H1 (cell line): ENCODE measurements at regions of chr9 and their contacts with region 1.

Region 1: GRCh38 chr9:14466429-14466818 is 152.5 kb upstream of the NFIB start:
- DNase-seq: no peak
- H3K4me3 ChIP-seq: no peak overlapping the region
- H3K27ac ChIP-seq: no peak overlapping the region
- H3K4me1 ChIP-seq: peaks cover 6 to 15% (median 11%) of the 10 kb centered on the region in 4 experiments
- H3K27me3 ChIP-seq: no peaks in the 10 kb centered on the region
- CTCF ChIP-seq: no peak
- EP300 ChIP-seq: no peak
- POLR2A ChIP-seq: no peak
- RAD21 ChIP-seq: no peak; a peak in 1 of 4 replicates

Region 2: GRCh38 chr9:14478175-14479162 is 12.0 kb after region 1 on chr9:
- CTCF ChIA-PET with region 1: interaction called, 27 read pairs
- POLR2A ChIA-PET with region 1: no interaction called
- DNase-seq: no peak
- H3K4me3 ChIP-seq: no peak overlapping the region
- H3K27ac ChIP-seq: no peak overlapping the region
- H3K4me1 ChIP-seq: peaks cover 0 to 9% (median 2%) of the 10 kb centered on the region in 4 experiments; a peak in 2 of 7 replicates
- H3K27me3 ChIP-seq: no peaks in the 10 kb centered on the region
- CTCF ChIP-seq: no peak
- EP300 ChIP-seq: no peak
- POLR2A ChIP-seq: no peak
- RAD21 ChIP-seq: no peak

Region 3: GRCh38 chr9:14573333-14573732 is 106.9 kb after region 1 on chr9:
- CTCF ChIA-PET with region 1: interaction called, 12 read pairs
- POLR2A ChIA-PET with region 1: no interaction called
- DNase-seq: no peak
- H3K4me3 ChIP-seq: no peak overlapping the region
- H3K27ac ChIP-seq: no peak overlapping the region
- H3K4me1 ChIP-seq: no peaks in the 10 kb centered on the region
- H3K27me3 ChIP-seq: no peaks in the 10 kb centered on the region
- CTCF ChIP-seq: no peak
- EP300 ChIP-seq: no peak
- POLR2A ChIP-seq: no peak
- RAD21 ChIP-seq: no peak

Region 4: DNA sequence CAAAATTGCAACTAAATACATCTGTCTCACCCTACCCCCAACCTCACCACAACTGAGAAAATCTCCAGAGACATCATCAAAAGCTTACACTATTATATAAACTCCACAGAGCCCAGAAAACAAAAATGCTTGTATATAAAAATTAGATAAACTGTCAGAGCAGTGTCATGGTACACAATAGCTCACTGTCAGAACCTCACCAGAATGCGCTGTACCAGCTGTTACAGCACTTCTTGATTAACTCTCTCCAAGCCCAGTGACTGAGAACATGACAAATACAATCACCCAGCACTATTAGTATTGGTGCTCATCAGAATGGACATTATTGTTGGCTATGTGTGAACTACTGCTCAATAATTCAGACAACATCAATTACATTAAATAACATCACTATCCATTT is 161.1 kb after region 1 on chr9:
- CTCF ChIA-PET with region 1: interaction called, 10 read pairs
- POLR2A ChIA-PET with region 1: no interaction called
- DNase-seq: no peak
- H3K4me3 ChIP-seq: no peak overlapping the region
- H3K27ac ChIP-seq: no peak overlapping the region
- H3K4me1 ChIP-seq: peaks cover 0 to 3% (median under 1%) of the 10 kb centered on the region in 4 experiments; a peak in 2 of 7 replicates
- H3K27me3 ChIP-seq: no peaks in the 10 kb centered on the region
- CTCF ChIP-seq: no peak
- EP300 ChIP-seq: no peak
- POLR2A ChIP-seq: no peak
- RAD21 ChIP-seq: no peak

Region 5: GRCh38 chr9:14661421-14662059 is 195.1 kb after region 1 on chr9:
- CTCF ChIA-PET with region 1: interaction called, 21 read pairs
- POLR2A ChIA-PET with region 1: no interaction called
- DNase-seq: no peak
- H3K4me3 ChIP-seq: no peak overlapping the region
- H3K27ac ChIP-seq: no peak overlapping the region
- H3K4me1 ChIP-seq: no peaks in the 10 kb centered on the region
- H3K27me3 ChIP-seq: no peaks in the 10 kb centered on the region
- CTCF ChIP-seq: peak in 2 of 3 experiments; percentile 16 to 41; a peak in 2 of 4 replicates
- EP300 ChIP-seq: no peak
- POLR2A ChIP-seq: no peak
- RAD21 ChIP-seq: peak; percentile 48 to 53